Dendritic cell treated with granulocyte-macrophage colony-stimulating factor and Interleukin-4, amounts not matched to agents 40 ng/mL and 50 ng/mL, for 4 days (primary cell): ENCODE measurements at regions of chr10 and their contacts with region 1.

Region 1: DNA sequence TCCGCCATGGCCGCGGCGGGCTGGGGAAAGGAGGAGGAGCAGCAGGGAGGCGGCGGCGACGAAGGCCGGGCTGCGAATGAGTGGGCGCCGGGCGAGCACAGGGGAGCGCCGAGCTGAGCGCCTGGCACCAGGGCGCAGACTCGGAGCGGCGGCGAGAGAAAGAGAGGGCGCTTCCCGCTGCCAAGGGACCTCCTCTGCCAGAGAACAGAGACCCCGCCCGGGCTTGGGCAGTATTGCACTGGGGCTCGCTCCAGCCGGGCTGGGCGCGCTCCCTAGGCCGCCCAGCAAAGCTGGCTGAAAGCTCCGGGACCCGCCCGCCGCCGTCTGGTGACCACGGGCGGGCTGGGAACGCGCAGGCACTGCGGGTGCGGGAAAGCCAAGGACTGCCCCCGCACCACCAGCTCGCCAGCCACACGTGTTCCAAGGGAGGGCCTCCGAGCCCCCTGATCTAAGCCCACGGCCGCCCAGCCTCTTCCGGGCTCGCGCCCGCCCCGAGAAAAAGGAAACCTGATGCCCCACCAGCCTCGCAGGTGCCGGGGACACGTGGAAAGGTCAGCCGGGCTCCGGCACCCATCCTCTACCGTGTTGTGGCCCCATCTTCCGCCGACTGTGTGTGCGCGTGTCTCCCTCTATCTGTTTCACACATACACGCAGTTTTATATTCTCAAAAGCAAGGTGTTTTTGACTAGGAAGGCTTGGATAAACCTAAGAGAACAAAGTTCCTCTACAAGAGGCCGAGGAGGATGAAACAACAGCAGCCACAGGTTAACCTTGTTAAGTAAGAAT is at the start of gene CCDC6:
- H3K4me3 Mint-ChIP-seq: peak within 1 kb of the TSS; percentile 99
- H3K27ac Mint-ChIP-seq: peak within 1 kb of the TSS; percentile 87
- H3K4me1 Mint-ChIP-seq: peaks cover 51% of the 10 kb centered on the region
- H3K27me3 Mint-ChIP-seq: no peaks in the 10 kb centered on the region

Region 2: GRCh38 chr10:59872892-59873463 is 33.6 kb before region 1 on chr10:
- intact Hi-C with region 1: loop called (anchors 5 kb)
- H3K4me3 Mint-ChIP-seq: no peak overlapping the region
- H3K27ac Mint-ChIP-seq: no peak overlapping the region
- H3K4me1 Mint-ChIP-seq: peaks cover 52% of the 10 kb centered on the region
- H3K27me3 Mint-ChIP-seq: no peaks in the 10 kb centered on the region

Region 3: DNA sequence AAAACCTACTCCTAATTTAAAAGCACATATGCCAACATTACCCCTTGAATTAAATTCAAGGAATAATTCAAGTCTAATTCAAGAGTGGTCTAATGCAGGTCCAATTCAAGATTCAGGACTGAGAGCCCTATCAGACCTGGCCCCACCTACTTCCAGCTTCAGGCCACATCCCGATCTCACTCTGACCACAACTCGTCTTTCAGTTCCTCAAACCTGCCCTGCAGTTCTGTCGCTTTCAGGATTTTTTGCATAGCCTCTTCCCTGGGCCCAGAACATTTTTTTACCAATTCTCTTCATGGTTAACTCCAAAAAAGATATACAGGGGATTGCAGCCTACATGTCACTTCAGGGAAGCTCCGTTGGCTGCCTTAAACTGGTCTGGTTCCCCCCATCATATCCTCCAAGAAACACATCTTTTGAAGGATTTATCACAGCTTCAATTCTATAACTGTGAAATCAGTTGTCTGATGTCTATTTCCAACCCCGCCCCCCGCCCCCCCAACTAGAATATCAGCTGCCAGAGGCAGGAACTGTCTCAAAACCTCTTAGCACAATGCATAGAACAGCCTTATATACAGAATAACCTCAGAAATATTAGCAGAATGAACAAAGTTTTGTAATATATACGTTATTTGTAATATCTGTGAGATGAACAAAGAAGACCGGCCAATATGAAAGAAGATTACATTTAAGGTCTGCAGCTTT is 21.0 kb before region 1 on chr10:
- intact Hi-C with region 1: loop called (anchors 2 kb)
- H3K4me3 Mint-ChIP-seq: peak overlapping the region; percentile 13
- H3K27ac Mint-ChIP-seq: peak overlapping the region; percentile 70
- H3K4me1 Mint-ChIP-seq: peaks cover 84% of the 10 kb centered on the region
- H3K27me3 Mint-ChIP-seq: no peaks in the 10 kb centered on the region

Region 4: DNA sequence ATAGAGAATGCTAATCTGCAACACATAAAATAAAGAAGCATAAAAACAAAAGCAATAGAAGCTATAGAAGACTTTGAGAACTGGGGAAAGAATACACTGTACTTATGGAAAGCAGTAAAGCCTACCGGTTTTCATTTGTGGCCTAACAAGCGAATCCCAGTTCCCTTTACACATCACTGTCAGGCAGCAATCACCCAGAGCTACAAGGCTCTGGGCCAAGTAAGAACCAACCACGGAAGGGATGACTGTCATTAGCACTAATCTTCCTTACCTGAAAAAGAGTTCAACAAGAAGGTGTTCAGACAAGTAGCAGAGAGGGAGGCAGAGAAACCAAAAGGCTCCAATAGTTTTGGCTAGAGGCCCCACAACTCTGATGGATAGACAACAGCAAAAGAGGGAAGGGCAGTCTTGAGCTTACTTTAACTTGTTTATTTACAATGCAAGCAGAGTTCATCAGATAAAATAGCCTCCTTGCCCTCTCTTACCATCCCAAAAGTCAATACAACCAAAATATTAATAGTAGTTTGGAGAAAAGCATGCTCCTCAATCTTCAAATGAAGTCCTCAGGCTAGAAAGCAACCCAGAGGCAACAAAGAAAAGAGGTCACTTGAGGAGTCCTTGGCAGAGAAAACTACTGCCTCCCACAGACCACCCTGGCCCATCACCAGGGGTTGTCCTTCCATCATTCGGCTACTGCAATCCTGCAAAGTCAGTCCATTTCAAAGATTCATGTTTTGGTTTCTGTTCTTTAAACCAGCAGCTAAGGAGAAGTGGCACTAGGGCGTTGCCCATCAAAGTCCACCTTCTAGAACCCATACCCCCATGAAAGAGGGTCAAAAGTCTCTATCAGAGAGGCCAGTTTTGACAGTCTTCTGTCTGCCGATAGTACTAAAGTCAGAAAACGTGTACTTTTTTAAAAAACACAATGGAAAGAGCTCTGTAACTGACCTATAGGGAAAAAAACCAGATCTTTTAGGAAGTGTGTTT is 15.0 kb before region 1 on chr10:
- intact Hi-C with region 1: loop called (anchors 2 kb)
- H3K4me3 Mint-ChIP-seq: peak overlapping the region; percentile 26
- H3K27ac Mint-ChIP-seq: peak overlapping the region; percentile 85
- H3K4me1 Mint-ChIP-seq: peaks cover 79% of the 10 kb centered on the region
- H3K27me3 Mint-ChIP-seq: no peaks in the 10 kb centered on the region

Region 5: DNA sequence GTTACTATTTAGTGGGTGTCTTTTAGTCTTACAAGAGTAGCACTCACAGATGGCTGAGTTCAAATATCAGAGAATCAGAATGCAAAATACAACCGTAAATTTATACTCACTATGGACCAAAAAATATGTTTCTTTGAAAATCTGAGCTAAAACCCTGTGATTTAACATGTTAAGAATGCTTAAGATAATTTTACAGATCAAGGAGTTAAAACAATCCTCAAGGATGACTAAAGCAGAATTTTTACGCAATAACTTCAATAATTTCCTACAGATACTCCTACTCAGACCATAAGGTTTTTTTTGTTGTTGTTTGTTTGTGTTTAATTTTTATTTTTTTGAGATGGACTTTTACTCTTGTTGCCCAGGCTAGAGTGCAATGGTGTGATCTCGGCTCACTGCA is 47.7 kb after region 1 on chr10:
- intact Hi-C with region 1: no loop called
- H3K4me3 Mint-ChIP-seq: no peak overlapping the region
- H3K27ac Mint-ChIP-seq: no peak overlapping the region
- H3K4me1 Mint-ChIP-seq: no peaks in the 10 kb centered on the region
- H3K27me3 Mint-ChIP-seq: peaks cover 3% of the 10 kb centered on the region

Region 6: DNA sequence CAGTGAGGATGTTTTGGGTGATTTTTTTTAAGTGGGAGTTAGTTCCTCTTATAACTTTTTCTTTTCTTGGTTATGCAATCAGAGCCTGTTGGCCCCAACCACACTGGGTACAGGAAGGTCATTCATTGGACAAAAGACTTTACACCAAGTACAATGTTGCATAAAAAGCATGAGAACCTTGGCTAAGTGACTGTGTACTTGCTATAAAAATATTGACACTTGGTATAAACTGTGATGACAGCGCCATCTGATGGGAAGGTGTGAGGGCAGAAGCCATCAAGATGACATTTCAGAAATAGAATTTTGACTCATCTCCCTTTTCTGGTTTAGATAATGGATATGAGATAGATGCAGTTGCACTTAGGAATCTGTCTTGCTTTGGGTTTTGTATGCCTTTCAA is 126.1 kb after region 1 on chr10:
- intact Hi-C with region 1: loop called (anchors 1 kb)
- H3K4me3 Mint-ChIP-seq: no peak overlapping the region
- H3K27ac Mint-ChIP-seq: peak overlapping the region; percentile 66
- H3K4me1 Mint-ChIP-seq: peaks cover 35% of the 10 kb centered on the region
- H3K27me3 Mint-ChIP-seq: no peaks in the 10 kb centered on the region